PC-9 (cell line): ENCODE measurements at regions of chr20 and their contacts with region 1.

Region 1: GRCh38 chr20:34522969-34523871 is 7.0 kb downstream of the DYNLRB1 start:
- DNase-seq: peak; percentile 44 to 55
- H3K4me3 ChIP-seq: no peak overlapping the region
- H3K27ac ChIP-seq: no peak overlapping the region
- H3K4me1 ChIP-seq: peaks cover 37% of the 10 kb centered on the region
- H3K27me3 ChIP-seq: no peaks in the 10 kb centered on the region
- CTCF ChIP-seq: peak; percentile 57

Region 2: GRCh38 chr20:34302723-34303528 is 220.3 kb before region 1 on chr20 and contains the start of gene AHCY:
- CTCF ChIA-PET with region 1: interaction called, 14 read pairs
- POLR2A ChIA-PET with region 1: interaction called, 6 read pairs
- intact Hi-C with region 1: loop called (anchors 2 kb)
- DNase-seq: peak; percentile 94 to 99
- H3K4me3 ChIP-seq: peak within 1 kb of the TSS; percentile 99
- H3K27ac ChIP-seq: peak within 1 kb of the TSS; percentile 81
- H3K4me1 ChIP-seq: peaks cover 20% of the 10 kb centered on the region
- H3K27me3 ChIP-seq: no peaks in the 10 kb centered on the region
- CTCF ChIP-seq: peak; percentile 13; the same call in 1 of the 2 replicates
- total RNA-seq, gene AHCY: 247 and 273 TPM in 2 replicates

Region 3: GRCh38 chr20:34510575-34510974 is 12.6 kb before region 1 on chr20:
- CTCF ChIA-PET with region 1: no interaction called
- POLR2A ChIA-PET with region 1: no interaction called
- intact Hi-C with region 1: no loop called
- DNase-seq: no peak
- H3K4me3 ChIP-seq: no peak overlapping the region
- H3K27ac ChIP-seq: no peak overlapping the region
- H3K4me1 ChIP-seq: 0 out of 2 replicates have a peak, but pooled peaks cover under 1% of the 10 kb centered on the region
- H3K27me3 ChIP-seq: no peaks in the 10 kb centered on the region
- CTCF ChIP-seq: no peak

Region 4: DNA sequence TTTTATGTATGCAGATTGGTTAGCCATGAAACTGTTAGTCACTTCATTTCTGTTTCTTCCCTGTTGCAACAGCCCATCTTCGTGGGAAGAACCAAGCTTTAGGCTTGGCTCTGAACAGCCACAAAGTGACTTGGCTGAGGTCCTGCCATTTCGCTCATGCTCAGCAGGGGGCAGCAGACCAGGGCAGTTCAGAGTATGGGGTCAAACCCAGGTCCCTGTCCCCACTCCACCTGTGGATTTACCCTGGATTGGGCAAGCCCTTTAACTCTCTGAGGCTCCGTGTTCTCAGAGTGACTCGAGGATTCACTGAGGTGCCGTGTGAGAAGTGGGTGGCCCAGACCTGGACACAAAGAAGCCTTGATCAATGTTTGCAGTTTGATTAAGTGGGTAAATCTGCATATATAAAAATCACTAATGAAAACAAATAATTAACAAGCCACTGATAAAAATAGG is 15.5 kb after region 1 on chr20:
- CTCF ChIA-PET with region 1: no interaction called
- POLR2A ChIA-PET with region 1: no interaction called
- intact Hi-C with region 1: no loop called
- DNase-seq: peak in 1 of 2 experiments; percentile 41
- H3K4me3 ChIP-seq: no peak overlapping the region
- H3K27ac ChIP-seq: peak overlapping the region; percentile 37; the same call in 1 of the 2 replicates
- H3K4me1 ChIP-seq: no peaks in the 10 kb centered on the region
- H3K27me3 ChIP-seq: no peaks in the 10 kb centered on the region
- CTCF ChIP-seq: peak; percentile 86

Region 5: DNA sequence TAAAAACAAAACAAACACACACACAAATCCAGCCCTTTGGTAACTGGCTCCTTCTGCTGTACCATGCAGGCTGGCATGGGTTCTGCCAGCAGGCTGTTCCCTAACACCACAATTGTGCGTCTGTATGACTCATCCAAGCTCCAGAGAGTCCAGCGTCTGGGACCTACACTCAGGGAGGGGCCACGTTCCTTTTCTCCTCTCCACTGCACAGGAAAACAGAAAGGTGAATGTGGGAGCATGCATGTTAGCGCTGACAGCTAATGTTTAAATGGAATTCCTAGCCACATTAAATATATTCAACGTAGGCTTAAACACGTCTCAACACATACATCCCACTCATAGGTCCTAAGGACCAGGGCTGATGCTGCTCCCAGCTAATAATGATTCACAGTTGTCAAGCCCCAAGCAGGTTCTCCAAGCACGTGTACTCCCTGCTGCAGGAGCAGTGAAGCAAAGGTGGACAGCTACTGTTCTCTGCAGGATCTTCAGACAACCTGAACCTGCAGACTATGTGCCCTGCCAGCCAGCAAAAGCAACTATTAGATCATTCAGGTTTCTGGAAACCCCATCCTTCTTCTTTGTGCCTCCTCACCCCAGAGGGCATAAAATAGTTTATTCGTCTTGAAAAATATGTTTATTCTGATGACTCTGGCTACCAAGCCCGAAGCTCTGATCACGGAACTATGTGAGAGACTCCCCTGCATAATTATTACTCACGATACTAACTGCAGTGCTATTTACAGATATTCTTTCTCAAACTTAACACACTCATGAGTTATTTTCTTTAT is 56.2 kb after region 1 on chr20:
- CTCF ChIA-PET with region 1: no interaction called
- POLR2A ChIA-PET with region 1: interaction called, 4 read pairs
- intact Hi-C with region 1: loop called (anchors 1 kb)
- DNase-seq: peak; percentile 61 to 78
- H3K4me3 ChIP-seq: no peak overlapping the region
- H3K27ac ChIP-seq: no peak overlapping the region
- H3K4me1 ChIP-seq: peaks cover 31% of the 10 kb centered on the region
- H3K27me3 ChIP-seq: no peaks in the 10 kb centered on the region
- CTCF ChIP-seq: peak; percentile 79

Region 6: DNA sequence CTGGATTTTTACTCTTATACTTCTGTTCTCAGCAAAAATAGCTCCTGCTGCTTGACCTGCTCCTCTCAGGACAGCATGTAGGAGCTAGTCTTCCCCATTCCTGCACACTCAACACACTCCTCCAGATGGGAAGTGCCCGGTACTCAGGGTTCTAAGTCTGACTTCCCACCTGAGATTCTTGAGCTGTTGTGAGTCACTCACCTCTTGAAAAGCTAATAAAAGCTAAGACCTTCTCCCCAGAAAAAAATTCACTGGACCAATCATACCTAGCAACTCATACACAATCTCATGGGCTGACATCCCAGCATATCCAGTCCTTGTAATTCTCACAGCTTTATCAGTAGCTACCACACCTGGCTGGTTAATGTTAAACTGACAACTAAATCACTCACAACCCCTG is 515.9 kb after region 1 on chr20:
- CTCF ChIA-PET with region 1: no interaction called
- POLR2A ChIA-PET with region 1: no interaction called
- intact Hi-C with region 1: no loop called
- DNase-seq: peak in 1 of 2 experiments; percentile 76
- H3K4me3 ChIP-seq: no peak overlapping the region
- H3K27ac ChIP-seq: peak overlapping the region; percentile 14
- H3K4me1 ChIP-seq: peaks cover 12% of the 10 kb centered on the region
- H3K27me3 ChIP-seq: no peaks in the 10 kb centered on the region
- CTCF ChIP-seq: no peak